ENCODE measurements at regions of chr22 and their contacts with region 1.

Region 1: DNA sequence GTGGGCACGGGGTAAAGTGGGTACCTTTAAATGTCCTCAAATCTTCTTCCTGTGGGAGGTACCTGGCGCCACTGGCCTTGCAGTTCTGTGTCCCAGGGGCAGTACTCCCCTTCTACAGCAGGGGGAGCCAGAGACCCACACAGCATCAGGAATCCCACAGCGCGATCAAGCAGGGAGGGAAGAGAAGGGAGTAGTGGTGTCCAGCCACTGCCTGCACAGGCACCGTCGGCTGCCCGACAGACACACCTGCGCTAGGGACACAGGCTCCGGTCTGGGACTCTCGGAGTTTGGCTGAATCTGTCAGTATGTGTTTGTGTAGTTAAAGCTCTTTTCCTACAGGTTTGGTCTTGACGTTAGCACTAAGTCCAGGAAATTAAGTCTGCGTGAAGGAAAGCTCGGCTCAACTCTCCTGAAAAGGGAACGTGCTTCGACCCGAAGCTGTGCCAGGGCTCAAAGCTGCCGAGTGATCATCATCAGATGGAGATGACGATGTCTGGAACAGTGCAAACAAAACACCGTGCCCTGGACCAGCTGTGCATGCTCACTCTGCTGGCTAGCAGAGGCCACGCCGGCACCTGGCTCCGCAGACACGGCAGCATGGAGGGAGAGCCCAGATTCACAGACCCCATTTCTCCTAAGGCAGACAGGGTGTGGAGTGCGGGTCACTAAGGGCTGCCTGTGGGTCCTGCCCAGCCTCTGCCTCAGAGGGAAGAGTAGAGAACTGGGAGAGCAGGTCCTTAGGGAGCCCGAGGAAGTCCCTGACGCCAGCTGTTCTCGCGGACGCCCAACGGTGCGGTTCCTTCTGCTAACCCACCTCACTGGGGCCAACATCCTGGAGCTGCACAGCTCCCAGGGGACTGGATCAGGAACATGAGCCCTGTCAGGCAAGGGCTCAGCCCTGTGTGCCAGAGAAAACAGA is 56.0 kb upstream of the BID start:
- DNase-seq: peak; percentile 89
- CTCF ChIP-seq: peak; percentile 98

Region 2: GRCh38 chr22:18077639-18078328 is 247.5 kb after region 1 on chr22 and contains the start of gene PEX26:
- in situ Hi-C with region 1: loop called (anchors 10 kb)
- DNase-seq: peak; percentile 96
- CTCF ChIP-seq: no peak